Naive thymus-derived CD4-positive, alpha-beta T cell (primary cell): ENCODE measurements at regions of chrX and their contacts with region 1.

Region 1: GRCh38 chrX:76427560-76428242 is at the start of gene MAGEE1:
- DNase-seq: peak; percentile 66 to 80 (median 75)
- ATAC-seq: peak; percentile 91
- H3K4me3 ChIP-seq: peak within 1 kb of the TSS; percentile 81
- H3K4me3 Mint-ChIP-seq: peak within 1 kb of the TSS; percentile 85 to 95 (median 91)
- H3K27ac ChIP-seq: peak within 1 kb of the TSS; percentile 89
- H3K27ac Mint-ChIP-seq: peak within 1 kb of the TSS; percentile 86 to 96 (median 92)
- H3K4me1 ChIP-seq: peaks cover 0 to 12% of the 10 kb centered on the region in 2 donors
- H3K4me1 Mint-ChIP-seq: peaks cover 12 to 47% (median 41%) of the 10 kb centered on the region in 7 donors
- H3K27me3 ChIP-seq: no peaks in the 10 kb centered on the region
- H3K27me3 Mint-ChIP-seq: peaks cover 0 to 4% (median 0%) of the 10 kb centered on the region in 5 donors
- total RNA-seq, gene MAGEE1: 2.7 to 11.8 (median 10.7) TPM

Region 2: DNA sequence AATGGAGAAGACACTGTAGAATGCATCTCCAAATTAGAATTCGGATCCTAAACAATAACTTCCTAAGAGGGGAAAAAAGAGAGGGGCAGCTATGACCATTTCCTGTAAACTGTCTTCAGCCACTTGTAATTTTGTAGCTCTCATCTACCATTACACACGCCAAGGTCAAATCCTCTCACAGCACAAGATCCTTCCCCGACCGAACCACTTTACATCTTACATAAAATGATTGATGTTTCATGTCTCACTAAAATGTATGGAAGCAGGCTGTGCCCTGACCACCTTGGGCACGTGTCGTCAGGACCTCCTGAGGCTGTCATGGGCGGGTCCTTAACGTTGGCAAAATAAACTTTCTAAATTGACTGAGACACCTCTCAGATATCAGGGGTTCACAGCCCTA is 278.9 kb before region 1 on chrX:
- CTCF ChIA-PET with region 1: no interaction called
- POLR2A ChIA-PET with region 1: interaction called, 4 read pairs
- intact Hi-C with region 1: loop called in 1 of 2 experiments (anchors 5 kb)
- DNase-seq: peak in 8 of 9 donors; percentile 25 to 77 (median 63)
- ATAC-seq: peak; percentile 45
- H3K4me3 ChIP-seq: peak overlapping the region; percentile 32
- H3K4me3 Mint-ChIP-seq: peak overlapping the region; percentile 78 to 98 (median 88)
- H3K27ac ChIP-seq: peak overlapping the region; percentile 78
- H3K27ac Mint-ChIP-seq: peak overlapping the region; percentile 93 to 100 (median 99)
- H3K4me1 ChIP-seq: peaks cover 8 to 14% of the 10 kb centered on the region in 2 donors
- H3K4me1 Mint-ChIP-seq: peaks cover 2 to 29% (median 17%) of the 10 kb centered on the region in 7 donors
- H3K27me3 ChIP-seq: no peaks in the 10 kb centered on the region
- H3K27me3 Mint-ChIP-seq: no peaks in the 10 kb centered on the region

Region 3: GRCh38 chrX:76538860-76539259 is 111.2 kb after region 1 on chrX:
- CTCF ChIA-PET with region 1: no interaction called
- POLR2A ChIA-PET with region 1: no interaction called
- intact Hi-C with region 1: no loop called
- DNase-seq: no peak
- ATAC-seq: no peak
- H3K4me3 ChIP-seq: no peak overlapping the region
- H3K4me3 Mint-ChIP-seq: no peak overlapping the region
- H3K27ac ChIP-seq: no peak overlapping the region
- H3K27ac Mint-ChIP-seq: no peak overlapping the region
- H3K4me1 ChIP-seq: no peaks in the 10 kb centered on the region
- H3K4me1 Mint-ChIP-seq: no peaks in the 10 kb centered on the region
- H3K27me3 ChIP-seq: no peaks in the 10 kb centered on the region
- H3K27me3 Mint-ChIP-seq: no peaks in the 10 kb centered on the region

Region 4: GRCh38 chrX:76796311-76796710 is 368.6 kb after region 1 on chrX:
- CTCF ChIA-PET with region 1: no interaction called
- POLR2A ChIA-PET with region 1: no interaction called
- intact Hi-C with region 1: no loop called
- DNase-seq: no peak
- ATAC-seq: no peak
- H3K4me3 ChIP-seq: no peak overlapping the region
- H3K4me3 Mint-ChIP-seq: no peak overlapping the region
- H3K27ac ChIP-seq: no peak overlapping the region
- H3K27ac Mint-ChIP-seq: no peak overlapping the region
- H3K4me1 ChIP-seq: no peaks in the 10 kb centered on the region
- H3K4me1 Mint-ChIP-seq: no peaks in the 10 kb centered on the region
- H3K27me3 ChIP-seq: no peaks in the 10 kb centered on the region
- H3K27me3 Mint-ChIP-seq: no peaks in the 10 kb centered on the region